CD4-positive, alpha-beta memory T cell (primary cell): ENCODE measurements at regions of chr6 and their contacts with region 1.

Region 1: DNA sequence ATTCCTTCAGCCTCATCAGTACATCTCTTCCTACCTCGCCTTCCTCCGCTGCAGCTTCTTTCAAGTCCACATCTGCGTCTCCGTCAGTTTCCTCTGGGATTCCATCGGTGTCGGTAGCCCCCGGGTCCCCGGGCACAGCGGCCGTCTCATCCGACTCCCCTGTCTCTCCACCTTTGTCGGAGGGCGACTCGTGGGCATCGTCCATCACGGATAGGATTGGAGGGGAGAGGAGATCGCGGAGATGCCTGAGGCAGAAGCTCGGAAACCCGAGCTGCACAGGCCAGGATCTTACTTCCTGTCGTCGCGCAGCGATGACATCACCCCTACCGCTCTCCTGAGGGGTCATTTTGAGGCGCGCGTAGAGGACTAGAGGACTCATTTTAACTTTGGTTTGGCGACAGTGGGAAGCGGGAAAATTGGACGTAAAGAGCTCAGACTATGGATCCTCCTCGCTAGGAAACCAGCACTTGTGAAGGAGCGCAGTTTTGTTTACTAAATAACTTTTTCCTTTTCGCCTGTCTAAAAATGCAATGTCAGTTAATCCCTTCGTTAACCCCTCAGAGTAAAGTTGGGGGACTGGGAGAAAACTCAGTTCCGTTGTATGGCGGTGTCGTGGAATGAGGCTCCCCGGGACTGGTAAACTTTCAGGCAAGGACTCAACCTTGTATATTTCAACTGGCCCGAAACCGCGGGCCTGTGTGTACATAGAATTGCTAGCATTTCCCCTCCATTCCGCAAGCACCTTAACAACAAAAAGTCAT is at the start of gene TAF11:
- DNase-seq: peak; percentile 87 to 93 (median 88)
- H3K4me3 ChIP-seq: peak within 1 kb of the TSS; percentile 70 to 91
- H3K4me3 Mint-ChIP-seq: peak within 1 kb of the TSS; percentile 97 to 100 (median 99)
- H3K27ac ChIP-seq: peak within 1 kb of the TSS; percentile 94
- H3K27ac Mint-ChIP-seq: peak within 1 kb of the TSS; percentile 95 to 100 (median 99)
- H3K4me1 ChIP-seq: peaks cover 31% of the 10 kb centered on the region
- H3K4me1 Mint-ChIP-seq: peaks cover 31 to 65% (median 52%) of the 10 kb centered on the region in 4 donors
- H3K27me3 ChIP-seq: no peaks in the 10 kb centered on the region
- H3K27me3 Mint-ChIP-seq: no peaks in the 10 kb centered on the region
- total RNA-seq, gene TAF11: 25.3 to 26.1 TPM

Region 2: GRCh38 chr6:34867484-34867883 is 20.4 kb before region 1 on chr6:
- CTCF ChIA-PET with region 1: no interaction called
- POLR2A ChIA-PET with region 1: no interaction called
- intact Hi-C with region 1: no loop called
- DNase-seq: no peak
- H3K4me3 ChIP-seq: no peak overlapping the region
- H3K4me3 Mint-ChIP-seq: no peak overlapping the region
- H3K27ac ChIP-seq: no peak overlapping the region
- H3K27ac Mint-ChIP-seq: no peak overlapping the region
- H3K4me1 ChIP-seq: no peaks in the 10 kb centered on the region
- H3K4me1 Mint-ChIP-seq: no peaks in the 10 kb centered on the region
- H3K27me3 ChIP-seq: no peaks in the 10 kb centered on the region
- H3K27me3 Mint-ChIP-seq: no peaks in the 10 kb centered on the region

Region 3: GRCh38 chr6:34912715-34913464 is 25.0 kb after region 1 on chr6:
- CTCF ChIA-PET with region 1: interaction called, 3 read pairs
- POLR2A ChIA-PET with region 1: interaction called, 15 read pairs
- intact Hi-C with region 1: loop called (anchors 1 kb)
- DNase-seq: peak; percentile 50 to 65 (median 61)
- H3K4me3 ChIP-seq: peak overlapping the region in 1 of 2 donors; percentile 25
- H3K4me3 Mint-ChIP-seq: peak overlapping the region; percentile 10 to 79 (median 59)
- H3K27ac ChIP-seq: no peak overlapping the region
- H3K27ac Mint-ChIP-seq: peak overlapping the region in 6 of 7 donors; percentile 1 to 76 (median 53)
- H3K4me1 ChIP-seq: peaks cover 25% of the 10 kb centered on the region
- H3K4me1 Mint-ChIP-seq: peaks cover 21 to 40% (median 32%) of the 10 kb centered on the region in 4 donors
- H3K27me3 ChIP-seq: no peaks in the 10 kb centered on the region
- H3K27me3 Mint-ChIP-seq: no peaks in the 10 kb centered on the region

Region 4: GRCh38 chr6:35259194-35259947 is 371.4 kb after region 1 on chr6 and contains the start of gene ZNF76:
- CTCF ChIA-PET with region 1: no interaction called
- POLR2A ChIA-PET with region 1: no interaction called
- intact Hi-C with region 1: loop called (anchors 10 kb)
- DNase-seq: peak; percentile 93 to 95 (median 94)
- H3K4me3 ChIP-seq: peak within 1 kb of the TSS; percentile 76 to 94
- H3K4me3 Mint-ChIP-seq: peak within 1 kb of the TSS; percentile 95 to 100 (median 98)
- H3K27ac ChIP-seq: peak within 1 kb of the TSS; percentile 92
- H3K27ac Mint-ChIP-seq: peak within 1 kb of the TSS; percentile 94 to 100 (median 99)
- H3K4me1 ChIP-seq: peaks cover 54% of the 10 kb centered on the region
- H3K4me1 Mint-ChIP-seq: peaks cover 37 to 57% (median 48%) of the 10 kb centered on the region in 4 donors
- H3K27me3 ChIP-seq: no peaks in the 10 kb centered on the region
- H3K27me3 Mint-ChIP-seq: no peaks in the 10 kb centered on the region
- total RNA-seq, gene ZNF76: 97.5 to 106 TPM